ENCODE measurements at regions of chr1 and their contacts with region 1.

Region 1: GRCh38 chr1:9855186-9855585 is 31.4 kb upstream of the CLSTN1 start:
- DNase-seq: no peak
- ATAC-seq: no peak
- H3K4me3 ChIP-seq: no peak overlapping the region
- H3K27ac ChIP-seq: no peak overlapping the region
- H3K4me1 ChIP-seq: no peaks in the 10 kb centered on the region
- H3K27me3 ChIP-seq: no peaks in the 10 kb centered on the region
- CTCF ChIP-seq: no peak

Region 2: DNA sequence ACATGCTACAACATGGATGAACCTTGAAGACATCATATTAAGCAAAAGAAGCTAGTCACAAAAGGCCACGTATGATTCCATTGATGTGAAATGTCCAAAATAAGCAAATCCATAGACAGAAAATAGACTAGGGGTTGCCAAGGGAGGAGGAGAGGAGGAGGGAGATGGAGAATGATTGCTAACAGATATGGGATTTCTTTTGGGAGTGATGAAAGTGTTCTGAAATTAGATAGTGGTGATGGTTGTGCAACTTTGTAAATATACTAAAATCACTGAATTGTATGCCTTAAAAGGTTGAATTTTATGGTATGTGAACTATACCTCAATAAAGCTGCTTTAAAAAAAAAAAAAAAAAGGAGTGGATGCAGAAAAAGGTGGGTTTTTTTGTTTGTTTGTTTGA is 39.0 kb before region 1 on chr1:
- intact Hi-C with region 1: no loop called
- DNase-seq: no peak
- ATAC-seq: no peak
- H3K4me3 ChIP-seq: no peak overlapping the region
- H3K27ac ChIP-seq: no peak overlapping the region
- H3K4me1 ChIP-seq: peaks cover 20% of the 10 kb centered on the region
- H3K27me3 ChIP-seq: no peaks in the 10 kb centered on the region
- CTCF ChIP-seq: no peak

Region 3: GRCh38 chr1:9886092-9886742 is 31.0 kb after region 1 on chr1:
- intact Hi-C with region 1: loop called in 1 of 2 experiments (anchors 2 kb)
- DNase-seq: peak in 1 of 2 donors; percentile 5
- ATAC-seq: no peak
- H3K4me3 ChIP-seq: no peak overlapping the region
- H3K27ac ChIP-seq: no peak overlapping the region
- H3K4me1 ChIP-seq: peaks cover 13% of the 10 kb centered on the region
- H3K27me3 ChIP-seq: no peaks in the 10 kb centered on the region
- CTCF ChIP-seq: no peak

Measured in psoas muscle (tissue), 8 donors.